ENCODE measurements at regions of chr14 and their contacts with region 1.

Region 1: DNA sequence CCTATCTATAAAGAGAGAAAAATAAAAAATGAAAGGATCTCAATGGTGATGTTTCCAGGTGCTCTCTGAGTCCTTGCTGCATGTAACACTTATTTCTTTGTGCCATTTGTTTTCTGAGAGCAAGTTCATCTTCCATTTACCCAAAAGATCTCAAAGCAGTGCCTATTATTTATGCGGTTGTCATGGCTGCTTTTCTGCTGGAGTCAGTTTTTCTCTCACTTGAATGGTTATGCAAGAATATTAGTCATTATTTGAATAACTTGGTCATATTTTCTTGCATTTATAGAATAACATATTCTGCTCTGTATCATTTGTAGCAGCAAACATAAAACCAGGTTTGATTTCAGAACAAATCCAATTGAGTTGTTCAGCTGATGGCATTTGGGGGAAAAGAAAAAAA is 141.8 kb upstream of the G2E3 start:
- DNase-seq: no peak
- ATAC-seq: no peak
- H3K4me3 Mint-ChIP-seq: no peak overlapping the region
- H3K27ac Mint-ChIP-seq: no peak overlapping the region
- H3K4me1 Mint-ChIP-seq: no peaks in the 10 kb centered on the region
- H3K27me3 Mint-ChIP-seq: no peaks in the 10 kb centered on the region
- CTCF ChIP-seq: no peak

Region 2: DNA sequence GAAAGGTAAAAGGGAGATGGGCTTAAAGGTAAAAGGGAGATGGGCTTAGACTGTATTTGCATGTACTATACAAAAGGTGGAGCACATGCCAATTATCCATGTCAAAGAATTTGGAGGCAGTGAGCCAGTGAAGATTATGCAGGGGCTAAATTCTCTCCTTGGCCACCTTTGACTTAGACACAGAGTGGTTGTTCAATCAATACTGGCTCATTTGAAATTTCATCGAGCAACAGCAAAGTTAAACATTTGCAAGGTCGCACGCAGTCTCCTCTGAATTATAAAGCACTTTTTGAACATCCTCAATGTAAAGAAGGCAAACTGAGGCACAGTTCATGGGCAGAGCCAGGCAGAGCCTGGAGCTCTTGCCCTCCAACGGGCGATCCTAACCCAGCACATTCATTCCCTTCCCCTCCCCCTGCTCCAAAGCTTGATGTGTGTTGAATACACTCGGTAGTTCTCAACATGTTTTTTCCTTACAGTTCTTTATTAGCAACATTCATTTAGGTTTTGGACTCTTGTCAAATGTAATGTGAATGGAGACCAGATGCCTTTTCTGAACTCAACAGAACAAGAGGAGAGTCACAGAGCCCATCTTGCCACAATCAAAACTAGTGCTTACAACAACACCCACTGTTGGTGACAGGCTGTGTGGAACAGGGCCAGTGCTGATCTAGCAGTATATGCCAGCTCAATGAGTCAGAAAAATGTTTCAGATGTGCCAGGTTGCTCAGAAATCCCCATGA is 27.8 kb before region 1 on chr14:
- CTCF ChIA-PET with region 1: no interaction called
- POLR2A ChIA-PET with region 1: no interaction called
- intact Hi-C with region 1: no loop called
- DNase-seq: no peak
- ATAC-seq: no peak
- H3K4me3 Mint-ChIP-seq: no peak overlapping the region
- H3K27ac Mint-ChIP-seq: no peak overlapping the region
- H3K4me1 Mint-ChIP-seq: no peaks in the 10 kb centered on the region
- H3K27me3 Mint-ChIP-seq: no peaks in the 10 kb centered on the region
- CTCF ChIP-seq: no peak

Region 3: GRCh38 chr14:30541318-30541717 is 124.2 kb after region 1 on chr14:
- CTCF ChIA-PET with region 1: no interaction called
- POLR2A ChIA-PET with region 1: interaction called, 10 read pairs
- intact Hi-C with region 1: no loop called
- DNase-seq: no peak
- ATAC-seq: no peak
- H3K4me3 Mint-ChIP-seq: no peak overlapping the region
- H3K27ac Mint-ChIP-seq: no peak overlapping the region
- H3K4me1 Mint-ChIP-seq: no peaks in the 10 kb centered on the region
- H3K27me3 Mint-ChIP-seq: peaks cover 29% of the 10 kb centered on the region
- CTCF ChIP-seq: no peak

Measured in activated B cell treated with CpG ODN at 0.5 μM for 24 hours (primary cell).